ENCODE measurements at regions of chr5 and their contacts with region 1.

Region 1: GRCh38 chr5:56328753-56329560 is 95.8 kb upstream of the ANKRD55 start:
- DNase-seq: peak; percentile 59
- H3K4me3 Mint-ChIP-seq: peak overlapping the region; percentile 63
- H3K27ac Mint-ChIP-seq: peak overlapping the region; percentile 87
- H3K4me1 Mint-ChIP-seq: peaks cover 74% of the 10 kb centered on the region
- H3K27me3 Mint-ChIP-seq: no peaks in the 10 kb centered on the region

Region 2: DNA sequence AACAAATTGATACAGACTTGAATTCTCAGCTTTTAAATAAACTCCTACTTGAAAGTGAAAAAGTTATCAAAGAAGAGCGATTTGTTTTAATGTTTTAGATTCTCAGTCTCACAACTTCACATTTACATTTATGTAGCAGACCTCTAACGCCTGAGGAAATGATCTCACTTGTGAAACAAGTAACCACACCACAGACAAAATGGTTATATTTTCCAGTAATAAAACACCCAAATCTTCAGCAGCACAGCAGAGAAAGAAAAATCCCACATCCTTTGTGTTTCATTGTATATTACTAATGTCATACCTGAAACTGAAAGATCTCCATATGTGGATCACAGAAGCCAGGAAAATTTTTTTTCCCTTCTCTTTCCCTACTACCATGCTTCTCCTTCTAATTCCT is 1256.3 kb before region 1 on chr5:
- intact Hi-C with region 1: loop called (anchors 2 kb)
- DNase-seq: peak; percentile 31
- H3K4me3 Mint-ChIP-seq: peak overlapping the region; percentile 57
- H3K27ac Mint-ChIP-seq: peak overlapping the region; percentile 88
- H3K4me1 Mint-ChIP-seq: peaks cover 53% of the 10 kb centered on the region
- H3K27me3 Mint-ChIP-seq: no peaks in the 10 kb centered on the region

Region 3: DNA sequence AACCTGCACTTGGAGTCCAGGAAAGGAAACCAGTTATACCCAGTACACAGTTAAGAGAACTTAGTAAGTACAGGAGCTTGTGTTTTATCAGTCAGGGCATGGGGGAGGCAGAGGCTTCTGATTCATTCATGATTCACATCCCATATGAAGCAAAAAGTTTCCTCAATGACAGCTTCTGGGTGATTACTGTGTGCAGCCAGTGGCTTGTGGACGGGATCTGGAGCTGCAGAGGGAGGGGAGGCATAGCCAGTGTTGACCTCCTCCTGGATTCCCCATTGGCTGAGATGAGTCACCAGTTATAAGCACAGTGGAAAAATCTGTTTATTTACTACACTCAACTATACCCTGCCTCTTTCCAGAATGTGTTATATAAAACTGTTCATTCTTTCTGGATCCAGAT is 460.1 kb before region 1 on chr5:
- intact Hi-C with region 1: loop called (anchors 5 kb)
- DNase-seq: no peak
- H3K4me3 Mint-ChIP-seq: no peak overlapping the region
- H3K27ac Mint-ChIP-seq: peak overlapping the region; percentile 78
- H3K4me1 Mint-ChIP-seq: peaks cover 14% of the 10 kb centered on the region
- H3K27me3 Mint-ChIP-seq: no peaks in the 10 kb centered on the region

Region 4: GRCh38 chr5:56056875-56057274 is 272.1 kb before region 1 on chr5:
- intact Hi-C with region 1: no loop called
- DNase-seq: no peak
- H3K4me3 Mint-ChIP-seq: no peak overlapping the region
- H3K27ac Mint-ChIP-seq: no peak overlapping the region
- H3K4me1 Mint-ChIP-seq: peaks cover 52% of the 10 kb centered on the region
- H3K27me3 Mint-ChIP-seq: peaks cover 5% of the 10 kb centered on the region

Region 5: DNA sequence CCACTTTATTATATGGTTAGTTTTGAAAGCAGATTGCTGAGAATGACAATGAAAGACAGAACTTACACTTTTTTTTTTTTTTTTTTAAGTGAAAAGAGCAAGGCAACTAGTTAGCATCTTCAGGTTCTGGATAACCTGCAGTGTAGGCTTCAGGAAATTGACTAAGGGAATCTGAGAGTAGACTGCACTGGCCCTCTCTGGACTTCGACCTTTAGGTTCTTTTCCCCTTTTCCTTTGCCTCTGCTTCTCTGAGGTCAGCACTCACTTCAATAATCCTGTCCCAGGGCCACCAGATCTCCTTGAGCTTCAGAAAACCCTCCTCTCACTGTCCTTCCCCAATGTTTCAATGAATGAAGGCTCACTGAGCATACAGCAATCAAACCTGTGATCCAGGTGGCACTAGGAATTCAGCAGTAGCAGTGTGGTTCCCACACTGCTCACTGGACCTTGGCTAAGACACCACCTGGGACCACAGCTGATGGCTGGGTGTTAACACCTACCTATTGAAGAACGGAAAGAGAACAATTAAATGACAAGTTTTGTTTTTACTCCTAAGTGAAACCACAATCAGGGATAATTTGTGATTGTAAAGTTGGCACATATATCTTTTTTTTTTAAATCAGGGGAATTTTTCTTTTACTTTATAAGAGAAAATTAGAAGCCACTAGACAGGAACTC is 248.4 kb before region 1 on chr5:
- intact Hi-C with region 1: loop called (anchors 1 kb)
- DNase-seq: no peak
- H3K4me3 Mint-ChIP-seq: peak overlapping the region; percentile 38
- H3K27ac Mint-ChIP-seq: peak overlapping the region; percentile 37
- H3K4me1 Mint-ChIP-seq: peaks cover 45% of the 10 kb centered on the region
- H3K27me3 Mint-ChIP-seq: no peaks in the 10 kb centered on the region

Region 6: GRCh38 chr5:56314529-56314928 is 14.4 kb before region 1 on chr5:
- intact Hi-C with region 1: no loop called
- DNase-seq: no peak
- H3K4me3 Mint-ChIP-seq: no peak overlapping the region
- H3K27ac Mint-ChIP-seq: no peak overlapping the region
- H3K4me1 Mint-ChIP-seq: peaks cover 14% of the 10 kb centered on the region
- H3K27me3 Mint-ChIP-seq: no peaks in the 10 kb centered on the region

Region 7: GRCh38 chr5:56350598-56351170 is 21.7 kb after region 1 on chr5:
- intact Hi-C with region 1: loop called (anchors 1 kb)
- DNase-seq: no peak
- H3K4me3 Mint-ChIP-seq: no peak overlapping the region
- H3K27ac Mint-ChIP-seq: no peak overlapping the region
- H3K4me1 Mint-ChIP-seq: peaks cover 23% of the 10 kb centered on the region
- H3K27me3 Mint-ChIP-seq: peaks cover 2% of the 10 kb centered on the region

Region 8: GRCh38 chr5:56696900-56697299 is 367.9 kb after region 1 on chr5:
- intact Hi-C with region 1: loop called (anchors 1 kb)
- DNase-seq: no peak
- H3K4me3 Mint-ChIP-seq: no peak overlapping the region
- H3K27ac Mint-ChIP-seq: no peak overlapping the region
- H3K4me1 Mint-ChIP-seq: peaks cover 79% of the 10 kb centered on the region
- H3K27me3 Mint-ChIP-seq: peaks cover 3% of the 10 kb centered on the region

Region 9: GRCh38 chr5:57173185-57174127 is 844.5 kb after region 1 on chr5 and contains the start of gene GPBP1:
- intact Hi-C with region 1: loop called (anchors 1 kb)
- DNase-seq: peak; percentile 97
- H3K4me3 Mint-ChIP-seq: peak within 1 kb of the TSS; percentile 96
- H3K27ac Mint-ChIP-seq: peak within 1 kb of the TSS; percentile 97
- H3K4me1 Mint-ChIP-seq: peaks cover 47% of the 10 kb centered on the region
- H3K27me3 Mint-ChIP-seq: no peaks in the 10 kb centered on the region
- total RNA-seq, gene GPBP1: 94.6 and 106 TPM in 2 replicates

Measured in activated T-helper 1 cell treated with anti-CD3 and anti-CD28 coated beads, Interleukin-12 subunit alpha, Interleukin-12 subunit beta, Interleukin-2, Interleukin-4 antibody, amounts not matched to agents 30 ng/mL and 10 ng/mL and 1 ng/mL, durations not matched to agents 14 hours and 24 hours and 36 hours (primary cell).